Activated T-helper 2 cell treated with anti-CD3 and anti-CD28 coated beads, Interferon-gamma antibody, Interleukin-2, Interleukin-4, amounts not matched to agents 10 μg/mL and 5 μg/mL and 100 μg/mL, durations not matched to agents 14 hours and 24 hours and 36 hours (primary cell): ENCODE measurements at regions of chr12 and their contacts with region 1.

Region 1: GRCh38 chr12:14845350-14845750 is 2.0 kb upstream of the ART4 start:
- DNase-seq: no peak
- H3K4me3 Mint-ChIP-seq: no peak overlapping the region
- H3K27ac Mint-ChIP-seq: no peak overlapping the region
- H3K4me1 Mint-ChIP-seq: peaks cover 4% of the 10 kb centered on the region
- H3K27me3 Mint-ChIP-seq: no peaks in the 10 kb centered on the region

Region 2: DNA sequence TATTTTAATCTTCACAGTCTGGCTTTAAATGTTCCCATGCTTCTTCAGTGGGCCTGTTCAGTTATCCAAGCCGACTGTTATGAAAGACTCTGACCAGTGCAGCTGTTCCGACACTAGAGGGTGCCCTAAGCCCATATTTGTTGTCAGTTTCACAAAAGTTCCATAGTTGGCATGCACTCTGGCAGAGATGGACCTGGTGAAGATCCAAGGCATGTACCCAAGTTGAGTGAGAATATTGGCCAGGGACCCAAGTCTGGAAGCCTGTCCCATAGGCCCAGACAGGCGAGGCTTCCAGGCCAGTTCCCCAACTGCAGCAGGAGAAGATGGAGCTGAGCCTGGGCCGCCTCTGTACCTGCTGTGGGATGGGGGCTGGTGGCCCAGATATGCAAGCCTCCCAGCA is 121.6 kb before region 1 on chr12:
- intact Hi-C with region 1: loop called (anchors 1 kb)
- DNase-seq: peak; percentile 22
- H3K4me3 Mint-ChIP-seq: no peak overlapping the region
- H3K27ac Mint-ChIP-seq: no peak overlapping the region
- H3K4me1 Mint-ChIP-seq: peaks cover 2% of the 10 kb centered on the region
- H3K27me3 Mint-ChIP-seq: peaks cover 17% of the 10 kb centered on the region

Region 3: DNA sequence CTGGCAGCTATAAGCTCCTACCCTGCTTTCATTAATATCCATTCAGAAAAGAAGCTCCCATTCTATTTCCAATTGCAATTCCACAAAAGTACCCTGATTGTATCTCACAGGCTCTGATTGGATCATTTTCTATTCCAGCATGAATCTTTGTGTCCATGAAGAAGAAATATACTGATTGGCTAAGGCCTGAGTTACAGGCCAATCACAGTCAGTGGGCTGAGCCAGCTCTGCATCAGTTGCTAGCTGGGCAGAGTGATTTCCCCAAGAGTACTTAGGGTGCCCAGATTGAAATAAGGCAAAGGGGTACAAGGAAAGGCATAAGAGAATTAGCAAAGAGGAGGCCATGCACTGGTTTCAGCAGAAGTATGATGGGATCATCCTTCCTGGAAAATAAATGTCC is 16.5 kb before region 1 on chr12:
- intact Hi-C with region 1: no loop called
- DNase-seq: no peak
- H3K4me3 Mint-ChIP-seq: no peak overlapping the region
- H3K27ac Mint-ChIP-seq: no peak overlapping the region
- H3K4me1 Mint-ChIP-seq: peaks cover 4% of the 10 kb centered on the region
- H3K27me3 Mint-ChIP-seq: peaks cover 13% of the 10 kb centered on the region

Region 4: DNA sequence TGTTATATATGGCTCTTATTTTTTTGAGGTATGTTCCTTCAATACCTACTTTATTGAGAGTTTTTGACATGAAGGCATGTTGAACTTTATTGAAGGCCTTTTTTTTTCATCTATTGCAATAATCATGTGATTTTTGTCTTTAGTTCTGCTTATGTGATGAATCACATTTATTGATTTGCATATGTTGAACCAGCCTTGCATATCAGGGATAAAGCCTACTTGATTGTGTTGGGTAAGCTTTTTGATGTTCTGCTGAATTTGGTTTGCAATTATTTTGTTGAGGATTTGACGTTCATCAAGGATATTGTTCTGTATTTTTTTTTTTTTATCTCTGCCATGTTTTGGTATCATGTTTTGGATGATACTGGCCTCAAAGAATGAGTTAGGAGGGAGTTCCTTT is 13.2 kb after region 1 on chr12:
- intact Hi-C with region 1: no loop called
- DNase-seq: no peak
- H3K4me3 Mint-ChIP-seq: no peak overlapping the region
- H3K27ac Mint-ChIP-seq: no peak overlapping the region
- H3K4me1 Mint-ChIP-seq: no peaks in the 10 kb centered on the region
- H3K27me3 Mint-ChIP-seq: peaks cover 1% of the 10 kb centered on the region